Head of caudate nucleus (tissue), 42 donors: ENCODE measurements at regions of chr11 and their contacts with region 1.

Region 1: GRCh38 chr11:56783448-56784041 is 35.0 kb upstream of the OR9G4 start:
- DNase-seq: peak in 8 of 42 donors; percentile 6 to 35 (median 14)

Region 2: GRCh38 chr11:56624661-56625110 is 158.9 kb before region 1 on chr11:
- intact Hi-C with region 1: loop called (anchors 10 kb)
- DNase-seq: peak in 17 of 42 donors; percentile 9 to 75 (median 35)